ENCODE measurements at regions of chr3 and their contacts with region 1.

Region 1: DNA sequence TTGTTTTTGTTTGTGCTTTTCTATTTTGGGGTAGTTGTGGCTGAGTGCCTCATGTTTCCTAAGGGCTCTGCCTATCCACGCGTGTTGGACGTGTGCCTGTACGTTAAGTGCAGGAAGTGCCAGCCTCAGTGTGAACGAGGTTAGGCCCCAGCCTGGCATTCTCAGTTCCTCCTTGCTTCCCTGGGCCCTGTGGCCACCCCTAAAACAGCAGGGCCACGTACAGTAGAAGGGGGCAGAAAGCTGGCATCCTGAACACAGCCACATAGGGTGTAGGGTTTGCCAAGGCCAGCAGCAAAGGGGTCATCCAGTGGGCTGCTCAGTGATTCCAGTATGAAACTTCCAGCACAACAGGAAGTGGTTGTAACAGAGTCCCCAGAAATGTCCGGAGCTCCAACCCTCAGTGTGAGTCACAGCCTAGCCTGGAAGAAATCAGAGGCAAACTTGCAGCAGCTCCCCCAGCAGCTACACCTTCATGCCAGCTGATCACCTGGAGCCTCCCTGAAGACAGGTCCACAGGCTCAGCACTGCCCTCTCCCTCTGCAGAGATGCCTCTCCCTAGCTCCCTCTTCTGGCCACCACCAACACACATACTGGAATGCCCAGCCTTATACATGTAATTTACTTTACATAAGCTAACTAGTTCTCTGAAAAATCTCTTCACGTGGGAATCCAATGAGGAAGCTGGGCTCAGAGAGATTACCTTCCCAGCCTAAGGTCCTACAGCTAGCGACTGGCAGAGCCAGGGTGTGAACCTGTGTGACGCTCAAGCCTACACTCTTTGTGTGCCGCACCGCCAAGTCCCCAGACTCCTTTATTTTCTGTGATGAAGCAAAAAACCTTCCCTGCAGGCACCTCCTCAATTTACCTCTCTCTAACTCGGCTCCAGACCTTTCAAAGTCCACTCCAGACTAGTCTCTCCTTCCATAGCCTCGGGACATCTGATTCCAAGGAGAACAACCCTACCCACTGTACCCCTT is 26.6 kb downstream of the ILDR1 start:
- DNase-seq: peak; percentile 75
- ATAC-seq: peak; percentile 77
- H3K4me3 ChIP-seq: no peak overlapping the region
- H3K27ac ChIP-seq: peak overlapping the region; percentile 69
- H3K4me1 ChIP-seq: peaks cover 6% of the 10 kb centered on the region
- H3K27me3 ChIP-seq: no peaks in the 10 kb centered on the region
- CTCF ChIP-seq: peak; percentile 44
- POLR2A ChIP-seq: no peak
- RAD21 ChIP-seq: 0 out of 2 replicates have a peak, but pooled peaks have one; percentile 13

Region 2: DNA sequence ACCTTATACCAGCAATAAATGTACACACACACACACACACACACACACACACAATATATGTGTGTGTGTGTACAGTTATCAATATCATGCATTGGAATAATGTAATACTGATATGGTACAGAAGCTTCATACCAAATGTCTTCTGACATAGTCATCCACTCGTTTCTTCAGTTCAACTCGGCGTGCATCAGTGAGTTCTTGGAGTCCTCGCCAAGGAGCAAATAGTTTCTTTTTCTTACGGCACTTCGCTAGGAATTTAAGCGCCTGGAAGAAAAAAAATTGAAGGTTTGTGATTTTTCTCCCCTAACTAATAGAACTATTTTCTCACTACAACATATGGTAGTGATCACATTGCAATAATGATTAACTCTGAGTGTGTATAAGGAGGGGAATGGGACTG is 213.8 kb before region 1 on chr3:
- CTCF ChIA-PET with region 1: no interaction called
- POLR2A ChIA-PET with region 1: no interaction called
- dilution Hi-C with region 1: no loop called
- in situ Hi-C with region 1: no loop called
- intact Hi-C with region 1: loop called (anchors 1 kb)
- DNase-seq: no peak
- ATAC-seq: no peak
- H3K4me3 ChIP-seq: no peak overlapping the region
- H3K27ac ChIP-seq: no peak overlapping the region
- H3K4me1 ChIP-seq: no peaks in the 10 kb centered on the region
- H3K27me3 ChIP-seq: no peaks in the 10 kb centered on the region
- CTCF ChIP-seq: no peak
- POLR2A ChIP-seq: no peak
- RAD21 ChIP-seq: no peak